Activated T-helper 1 cell treated with anti-CD3 and anti-CD28 coated beads, Interleukin-12 subunit alpha, Interleukin-12 subunit beta, Interleukin-2, Interleukin-4 antibody, amounts not matched to agents 30 ng/mL and 10 ng/mL and 1 ng/mL, durations not matched to agents 14 hours and 24 hours and 36 hours (primary cell): ENCODE measurements at regions of chr3 and their contacts with region 1.

Region 1: GRCh38 chr3:8970971-8971589 is 7.8 kb upstream of the RAD18 start:
- DNase-seq: peak; percentile 59
- H3K4me3 Mint-ChIP-seq: no peak overlapping the region
- H3K27ac Mint-ChIP-seq: no peak overlapping the region
- H3K4me1 Mint-ChIP-seq: peaks cover 5% of the 10 kb centered on the region
- H3K27me3 Mint-ChIP-seq: peaks cover 25% of the 10 kb centered on the region

Region 2: DNA sequence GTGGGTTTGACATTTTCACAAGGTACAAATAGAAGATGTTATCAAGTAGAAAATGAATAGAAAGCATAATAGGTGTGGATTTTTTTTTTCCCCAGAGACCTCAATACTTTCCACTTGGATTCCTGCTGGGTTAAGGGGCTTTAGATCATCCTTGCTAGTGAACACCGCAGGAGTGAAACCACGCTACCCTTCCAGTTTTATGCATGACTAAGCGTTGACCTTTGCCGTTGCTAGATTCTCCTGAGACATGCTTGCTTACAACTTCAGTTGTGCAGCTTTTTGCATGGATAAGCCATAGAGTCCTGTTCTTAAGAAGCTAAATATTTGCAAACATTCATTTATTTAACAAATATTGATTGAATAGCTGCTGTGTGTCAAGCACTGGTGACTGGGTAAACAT is 769.2 kb before region 1 on chr3:
- intact Hi-C with region 1: no loop called
- DNase-seq: no peak
- H3K4me3 Mint-ChIP-seq: no peak overlapping the region
- H3K27ac Mint-ChIP-seq: no peak overlapping the region
- H3K4me1 Mint-ChIP-seq: no peaks in the 10 kb centered on the region
- H3K27me3 Mint-ChIP-seq: no peaks in the 10 kb centered on the region

Region 3: GRCh38 chr3:8987645-8988383 is 16.7 kb after region 1 on chr3:
- intact Hi-C with region 1: loop called (anchors 1 kb)
- DNase-seq: peak; percentile 38
- H3K4me3 Mint-ChIP-seq: no peak overlapping the region
- H3K27ac Mint-ChIP-seq: no peak overlapping the region
- H3K4me1 Mint-ChIP-seq: no peaks in the 10 kb centered on the region
- H3K27me3 Mint-ChIP-seq: peaks cover 3% of the 10 kb centered on the region

Region 4: DNA sequence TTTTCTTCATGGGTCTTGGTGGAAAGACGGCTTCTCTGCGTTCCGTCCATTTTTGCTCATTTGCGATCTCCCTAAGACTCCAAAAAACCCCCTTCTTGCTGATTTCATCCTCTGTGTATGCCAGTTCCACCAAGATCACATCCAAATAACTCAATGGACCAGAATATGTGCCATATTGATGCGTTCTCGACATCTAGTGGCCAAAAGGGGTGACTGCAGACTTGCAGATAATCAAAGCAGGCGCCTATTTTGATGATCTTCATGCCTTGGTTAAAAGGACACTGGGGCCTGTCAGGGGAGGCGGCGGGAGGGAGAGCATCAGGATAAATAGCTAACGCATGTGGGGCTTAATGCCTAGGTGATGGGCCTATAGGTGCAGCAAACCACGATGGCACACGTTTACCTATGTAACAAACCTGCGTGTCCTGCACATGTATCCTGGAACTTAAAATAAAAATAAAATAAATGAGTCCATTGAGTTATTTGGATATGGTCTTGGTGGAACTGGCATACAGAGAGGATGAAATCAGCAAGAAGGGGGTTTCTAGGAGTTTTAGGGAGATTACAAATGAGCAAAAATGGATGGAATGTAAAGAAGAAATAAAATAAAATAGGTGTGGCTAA is 96.4 kb after region 1 on chr3:
- intact Hi-C with region 1: loop called (anchors 1 kb)
- DNase-seq: no peak
- H3K4me3 Mint-ChIP-seq: no peak overlapping the region
- H3K27ac Mint-ChIP-seq: no peak overlapping the region
- H3K4me1 Mint-ChIP-seq: no peaks in the 10 kb centered on the region
- H3K27me3 Mint-ChIP-seq: peaks cover 4% of the 10 kb centered on the region

Region 5: GRCh38 chr3:9135930-9136525 is 164.9 kb after region 1 on chr3:
- intact Hi-C with region 1: no loop called
- DNase-seq: no peak
- H3K4me3 Mint-ChIP-seq: no peak overlapping the region
- H3K27ac Mint-ChIP-seq: no peak overlapping the region
- H3K4me1 Mint-ChIP-seq: no peaks in the 10 kb centered on the region
- H3K27me3 Mint-ChIP-seq: peaks cover 25% of the 10 kb centered on the region

Region 6: GRCh38 chr3:9249273-9250192 is 278.5 kb after region 1 on chr3 and contains the start of gene SRGAP3:
- intact Hi-C with region 1: loop called (anchors 1 kb)
- DNase-seq: peak; percentile 74
- H3K4me3 Mint-ChIP-seq: peak within 1 kb of the TSS; percentile 81
- H3K27ac Mint-ChIP-seq: no peak within 1 kb of the TSS
- H3K4me1 Mint-ChIP-seq: peaks cover 22% of the 10 kb centered on the region
- H3K27me3 Mint-ChIP-seq: peaks cover 23% of the 10 kb centered on the region
- total RNA-seq, gene SRGAP3: 0.54 and 0.61 TPM in 2 replicates

Region 7: GRCh38 chr3:9302425-9303181 is 331.5 kb after region 1 on chr3:
- intact Hi-C with region 1: loop called (anchors 1 kb)
- DNase-seq: peak; percentile 63
- H3K4me3 Mint-ChIP-seq: no peak overlapping the region
- H3K27ac Mint-ChIP-seq: no peak overlapping the region
- H3K4me1 Mint-ChIP-seq: peaks cover 5% of the 10 kb centered on the region
- H3K27me3 Mint-ChIP-seq: peaks cover 3% of the 10 kb centered on the region

Region 8: DNA sequence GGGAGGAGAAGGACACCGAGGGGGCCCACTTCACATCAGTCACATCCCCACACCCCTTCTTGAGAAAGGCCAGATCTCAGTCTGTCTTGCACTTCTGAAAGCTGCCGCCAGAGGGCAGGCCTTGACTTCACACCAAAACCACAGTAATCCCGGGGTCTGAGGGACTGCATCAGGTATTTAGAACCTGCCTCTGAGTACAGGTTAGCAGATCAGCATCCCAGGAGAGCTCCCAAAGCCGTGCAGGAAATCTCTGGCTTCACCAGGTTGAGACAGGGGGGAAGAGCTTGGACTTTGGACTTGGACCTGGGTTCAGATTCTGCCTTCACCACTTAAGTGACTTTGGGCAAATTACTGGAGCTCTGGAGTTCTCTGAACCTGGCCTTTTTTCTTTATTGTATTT is 532.2 kb after region 1 on chr3:
- intact Hi-C with region 1: loop called (anchors 5 kb)
- DNase-seq: peak; percentile 57
- H3K4me3 Mint-ChIP-seq: no peak overlapping the region
- H3K27ac Mint-ChIP-seq: no peak overlapping the region
- H3K4me1 Mint-ChIP-seq: no peaks in the 10 kb centered on the region
- H3K27me3 Mint-ChIP-seq: peaks cover 26% of the 10 kb centered on the region